ENCODE measurements at regions of chr5 and their contacts with region 1.

Region 1: GRCh38 chr5:132714456-132715307 is 22.7 kb downstream of the KIF3A start:
- H3K4me3 Mint-ChIP-seq: no peak overlapping the region
- H3K27ac Mint-ChIP-seq: no peak overlapping the region
- H3K4me1 Mint-ChIP-seq: no peaks in the 10 kb centered on the region
- H3K27me3 Mint-ChIP-seq: no peaks in the 10 kb centered on the region

Region 2: DNA sequence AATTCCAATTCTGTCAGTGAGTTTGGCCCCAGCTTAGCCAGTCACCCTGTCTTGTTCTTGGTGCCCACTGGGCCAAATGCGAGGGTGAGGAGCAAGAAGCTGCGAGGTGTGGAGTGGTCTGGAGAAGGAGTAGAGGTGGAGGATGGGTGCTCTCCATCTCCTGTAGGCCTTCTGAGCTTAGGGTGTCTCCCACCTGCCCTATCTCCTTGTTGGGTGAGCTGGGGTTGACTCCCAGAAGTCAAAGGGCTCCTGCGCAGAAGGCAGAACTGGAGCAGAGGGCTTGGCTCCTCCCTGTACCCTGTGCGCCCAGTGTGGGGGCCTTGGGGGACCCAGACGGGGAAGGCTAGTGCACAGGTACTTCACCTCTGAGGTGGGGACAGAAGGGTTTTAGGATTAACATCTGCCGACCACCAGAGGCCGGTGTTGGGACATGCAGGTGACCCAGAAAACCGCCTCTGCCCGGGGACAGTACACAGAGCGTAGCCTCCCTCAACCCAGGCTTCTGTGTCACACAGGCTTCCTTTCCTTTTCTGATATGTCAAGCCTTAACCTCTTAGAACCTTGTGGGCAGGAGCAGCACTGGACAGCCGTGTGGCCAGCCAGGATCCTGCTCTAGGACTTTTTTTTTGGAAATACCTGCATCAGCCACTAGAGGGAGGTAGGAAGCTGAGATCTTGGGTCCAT is 188.2 kb before region 1 on chr5:
- intact Hi-C with region 1: loop called (anchors 10 kb)
- H3K4me3 Mint-ChIP-seq: no peak overlapping the region
- H3K27ac Mint-ChIP-seq: no peak overlapping the region
- H3K4me1 Mint-ChIP-seq: peaks cover 23% of the 10 kb centered on the region
- H3K27me3 Mint-ChIP-seq: peaks cover 19% of the 10 kb centered on the region

Region 3: GRCh38 chr5:132677191-132677590 is 37.5 kb before region 1 on chr5:
- intact Hi-C with region 1: no loop called
- H3K4me3 Mint-ChIP-seq: no peak overlapping the region
- H3K27ac Mint-ChIP-seq: no peak overlapping the region
- H3K4me1 Mint-ChIP-seq: no peaks in the 10 kb centered on the region
- H3K27me3 Mint-ChIP-seq: no peaks in the 10 kb centered on the region